Activated B cell treated with CpG ODN at 0.5 μM for 24 hours (primary cell): ENCODE measurements at regions of chr17 and their contacts with region 1.

Region 1: GRCh38 chr17:76737082-76737675 is at the start of gene SRSF2:
- DNase-seq: peak; percentile 99
- ATAC-seq: peak; percentile 74
- H3K4me3 Mint-ChIP-seq: peak within 1 kb of the TSS; percentile 97
- H3K27ac Mint-ChIP-seq: peak within 1 kb of the TSS; percentile 96
- H3K4me1 Mint-ChIP-seq: peaks cover 50% of the 10 kb centered on the region
- H3K27me3 Mint-ChIP-seq: no peaks in the 10 kb centered on the region
- CTCF ChIP-seq: no peak
- total RNA-seq, gene SRSF2: 335 and 367 TPM in 2 replicates

Region 2: DNA sequence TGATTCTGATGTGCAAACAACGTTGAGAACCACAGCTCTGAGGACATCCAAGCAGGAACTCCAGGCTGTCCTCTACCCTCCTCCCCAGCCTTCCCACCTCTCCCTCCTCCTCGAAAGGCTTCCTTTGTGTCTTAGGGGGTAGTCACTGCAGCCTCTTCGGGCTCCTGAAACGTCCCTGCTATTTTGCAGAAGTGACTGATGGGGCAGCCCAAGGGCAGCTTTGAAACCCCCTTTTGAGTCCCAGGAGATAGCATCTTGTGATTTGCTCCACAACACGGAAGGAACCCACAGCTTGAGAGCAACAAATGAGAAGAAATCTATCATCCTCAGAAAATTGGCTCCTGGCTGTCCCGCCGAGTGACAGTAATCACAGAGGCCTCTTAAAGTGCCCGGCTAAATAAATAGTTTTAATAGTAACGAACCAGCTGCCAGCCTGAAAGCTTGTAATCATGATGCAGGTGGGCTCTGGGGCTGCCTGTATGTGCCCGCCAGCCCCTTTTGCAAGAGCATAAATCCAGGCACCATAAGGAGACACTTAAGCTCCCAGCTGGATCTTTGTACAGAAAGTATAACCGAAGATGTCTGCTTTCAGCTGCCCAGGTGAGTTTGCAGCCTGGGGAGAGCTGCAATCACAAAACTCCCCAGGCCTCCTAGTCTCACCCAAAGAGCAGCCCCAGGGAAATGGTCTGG is 342.0 kb after region 1 on chr17:
- CTCF ChIA-PET with region 1: no interaction called
- POLR2A ChIA-PET with region 1: no interaction called
- intact Hi-C with region 1: loop called (anchors 1 kb)
- DNase-seq: peak; percentile 25
- ATAC-seq: peak; percentile 97
- H3K4me3 Mint-ChIP-seq: peak overlapping the region; percentile 51
- H3K27ac Mint-ChIP-seq: peak overlapping the region; percentile 76
- H3K4me1 Mint-ChIP-seq: peaks cover 13% of the 10 kb centered on the region
- H3K27me3 Mint-ChIP-seq: peaks cover 11% of the 10 kb centered on the region
- CTCF ChIP-seq: no peak